Activated T-helper 2 cell treated with anti-CD3 and anti-CD28 coated beads, Interferon-gamma antibody, Interleukin-2, Interleukin-4, amounts not matched to agents 10 μg/mL and 5 μg/mL and 100 μg/mL, durations not matched to agents 14 hours and 24 hours and 36 hours (primary cell): ENCODE measurements at regions of chr17 and their contacts with region 1.

Region 1: DNA sequence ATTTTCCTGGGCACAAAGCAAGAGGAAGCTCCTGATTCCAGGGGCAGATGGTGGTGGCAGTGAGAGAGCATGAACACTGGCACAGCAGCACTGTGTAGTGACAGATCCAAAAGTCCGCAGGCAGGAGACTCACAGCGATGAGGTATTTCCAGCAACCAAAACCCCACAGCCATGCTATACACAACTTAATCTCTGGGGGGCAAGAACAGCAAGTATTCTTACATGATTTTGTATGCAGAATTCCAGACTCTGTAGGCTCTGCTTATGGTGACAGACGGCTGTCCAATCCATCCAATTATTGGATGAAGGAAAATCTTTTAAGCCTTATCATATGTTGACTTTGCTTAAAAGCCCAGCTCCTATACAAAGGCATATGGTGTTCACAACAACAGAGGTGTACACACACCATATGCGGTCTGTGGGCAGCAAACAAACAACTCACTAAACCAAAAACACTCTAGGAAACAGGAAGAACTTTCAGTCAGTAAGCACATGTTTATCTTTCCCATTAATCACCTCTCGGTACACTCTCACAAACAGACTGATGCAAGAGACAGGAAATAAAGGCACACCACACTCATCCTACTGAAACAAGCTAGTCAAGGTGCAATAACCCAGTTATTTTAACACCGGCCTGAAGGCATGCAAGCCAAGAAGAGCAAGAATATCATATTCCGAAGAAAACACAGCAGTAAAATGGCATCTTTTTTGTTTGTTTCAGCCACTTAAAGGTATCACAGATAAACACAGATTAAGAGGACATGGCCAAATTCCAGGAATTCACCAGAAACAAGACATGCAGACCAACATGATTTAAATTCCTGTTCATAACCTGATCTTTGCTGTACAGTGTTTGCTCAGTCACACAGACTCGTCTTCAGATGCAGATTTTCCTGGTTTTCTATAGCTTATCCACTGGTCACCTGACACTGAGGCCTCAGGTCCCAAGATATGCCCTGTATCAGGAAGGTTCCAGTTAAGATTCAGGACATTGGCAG is 47.8 kb downstream of the ERN1 start:
- DNase-seq: peak; percentile 39
- H3K4me3 Mint-ChIP-seq: peak overlapping the region; percentile 67
- H3K27ac Mint-ChIP-seq: peak overlapping the region; percentile 89
- H3K4me1 Mint-ChIP-seq: peaks cover 46% of the 10 kb centered on the region
- H3K27me3 Mint-ChIP-seq: no peaks in the 10 kb centered on the region

Region 2: DNA sequence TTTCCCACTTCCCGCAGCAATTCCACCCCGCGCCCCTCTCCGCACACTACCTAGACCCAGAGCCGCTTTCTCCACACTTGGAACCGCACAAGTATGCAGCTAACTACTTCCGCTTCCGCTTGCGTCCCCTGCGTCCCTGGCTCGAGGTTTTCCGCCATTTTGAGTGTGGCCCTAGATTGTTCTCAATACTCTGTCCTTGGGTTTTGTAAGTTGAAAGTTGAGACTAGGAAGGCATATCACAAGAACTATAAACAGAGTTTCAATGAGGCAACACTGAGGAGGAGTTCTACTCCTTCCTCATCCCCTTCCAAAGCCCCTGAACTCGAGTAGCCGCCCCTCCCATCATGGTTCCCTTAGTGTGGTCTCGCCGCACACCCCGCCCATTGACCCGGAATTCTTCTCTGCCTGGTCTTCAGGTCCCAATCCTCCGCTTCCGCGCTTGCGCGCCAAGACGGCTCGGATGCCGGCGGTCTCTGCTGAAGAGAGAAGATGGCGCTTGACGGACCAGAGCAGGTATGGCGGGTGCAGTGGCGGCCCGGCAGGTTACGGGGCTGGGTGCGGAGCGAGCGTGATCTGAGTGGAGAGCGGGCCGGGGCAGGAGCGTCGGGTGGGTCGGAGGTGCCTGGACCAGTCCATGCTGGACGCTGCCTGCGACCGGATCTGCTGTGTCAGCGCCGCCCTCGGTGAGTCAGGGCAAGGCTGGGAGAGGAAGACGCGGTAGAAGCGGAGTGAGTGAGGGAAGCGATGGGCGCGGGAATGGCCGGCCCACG is 254.9 kb before region 1 on chr17 and contains the starts of genes FTSJ3 and PSMC5:
- intact Hi-C with region 1: no loop called
- DNase-seq: peak; percentile 94
- H3K4me3 Mint-ChIP-seq: peak within 1 kb of the TSS; percentile 94
- H3K27ac Mint-ChIP-seq: peak within 1 kb of the TSS; percentile 99
- H3K4me1 Mint-ChIP-seq: peaks cover 56% of the 10 kb centered on the region
- H3K27me3 Mint-ChIP-seq: no peaks in the 10 kb centered on the region
- total RNA-seq, gene FTSJ3: 75.0 and 80.7 TPM in 2 replicates
- total RNA-seq, gene PSMC5: 185 and 204 TPM in 2 replicates

Region 3: DNA sequence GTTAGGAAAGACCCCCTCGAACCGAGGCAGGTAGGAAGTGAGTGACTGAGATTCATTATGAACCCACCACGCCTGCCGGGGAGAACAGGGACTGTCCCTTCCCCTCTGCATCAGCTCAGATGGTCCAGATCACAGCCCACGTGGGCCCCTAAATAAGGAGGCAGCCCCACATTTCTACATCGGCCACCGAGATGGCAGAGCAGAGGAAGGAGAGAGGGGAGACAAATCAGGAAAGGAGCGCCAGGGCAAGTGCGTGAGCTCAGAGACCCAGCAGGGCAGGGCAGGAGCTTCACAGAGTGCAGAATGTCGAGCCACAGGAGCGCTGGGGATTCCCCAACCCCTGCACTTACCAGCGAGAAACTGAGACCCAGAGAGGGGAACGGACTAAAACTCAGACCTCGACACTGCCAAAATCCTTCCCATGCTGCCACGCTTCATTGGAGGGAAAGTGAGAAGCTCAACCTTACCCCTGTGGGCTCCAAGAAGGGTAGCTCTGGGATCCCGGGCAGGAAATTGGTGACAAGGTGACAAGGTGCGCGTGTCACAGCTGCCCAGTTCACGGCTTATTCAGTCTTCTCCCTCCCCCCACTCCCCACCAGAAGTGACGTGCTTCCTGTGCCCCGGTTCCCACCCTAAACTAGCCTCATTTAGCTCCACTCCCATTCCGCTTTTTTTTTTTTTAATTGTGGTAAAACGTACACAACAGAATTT is 61.9 kb before region 1 on chr17 and contains the start of gene ICAM2:
- intact Hi-C with region 1: loop called (anchors 5 kb)
- DNase-seq: peak; percentile 88
- H3K4me3 Mint-ChIP-seq: peak within 1 kb of the TSS; percentile 99
- H3K27ac Mint-ChIP-seq: peak within 1 kb of the TSS; percentile 99
- H3K4me1 Mint-ChIP-seq: peaks cover 60% of the 10 kb centered on the region
- H3K27me3 Mint-ChIP-seq: no peaks in the 10 kb centered on the region
- total RNA-seq, gene ICAM2: 83.2 and 85.6 TPM in 2 replicates

Region 4: GRCh38 chr17:64063766-64064224 is 18.3 kb before region 1 on chr17:
- intact Hi-C with region 1: loop called (anchors 1 kb)
- DNase-seq: no peak
- H3K4me3 Mint-ChIP-seq: no peak overlapping the region
- H3K27ac Mint-ChIP-seq: peak overlapping the region; percentile 30
- H3K4me1 Mint-ChIP-seq: peaks cover 80% of the 10 kb centered on the region
- H3K27me3 Mint-ChIP-seq: no peaks in the 10 kb centered on the region

Region 5: DNA sequence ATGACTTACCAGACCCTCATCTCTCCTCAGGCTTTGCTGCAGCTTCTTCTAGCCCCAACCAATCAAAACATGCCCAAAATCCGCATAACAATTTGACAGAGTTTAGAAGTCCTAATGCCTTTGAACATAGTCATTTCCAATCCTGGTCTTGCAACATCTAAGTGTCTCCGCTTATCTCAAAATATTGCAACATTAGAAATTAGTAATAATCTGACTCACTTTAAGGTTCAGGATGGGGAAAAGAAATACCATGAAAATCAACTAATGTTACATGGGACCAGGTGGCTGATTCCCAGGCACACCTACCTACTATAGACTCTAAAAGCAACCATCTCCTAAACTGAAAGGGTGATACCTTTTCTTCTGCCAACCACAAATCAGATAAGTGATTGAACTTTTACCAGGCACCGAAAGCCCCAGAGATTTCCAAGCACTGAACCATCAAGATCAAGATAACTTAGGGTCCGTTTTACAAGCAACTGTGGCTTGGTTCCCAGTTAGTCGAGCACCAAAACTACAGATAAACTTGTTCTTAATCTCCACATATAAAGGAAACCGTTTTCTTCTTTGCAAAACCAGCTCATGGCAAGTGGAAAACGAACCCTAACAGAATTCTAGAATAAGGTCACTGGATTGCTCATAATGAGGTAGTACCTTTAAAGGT is 33.9 kb after region 1 on chr17:
- intact Hi-C with region 1: loop called (anchors 1 kb)
- DNase-seq: peak; percentile 26
- H3K4me3 Mint-ChIP-seq: peak overlapping the region; percentile 50
- H3K27ac Mint-ChIP-seq: peak overlapping the region; percentile 90
- H3K4me1 Mint-ChIP-seq: peaks cover 67% of the 10 kb centered on the region
- H3K27me3 Mint-ChIP-seq: no peaks in the 10 kb centered on the region

Region 6: GRCh38 chr17:64385187-64386083 is 303.3 kb after region 1 on chr17:
- intact Hi-C with region 1: loop called (anchors 10 kb)
- DNase-seq: no peak
- H3K4me3 Mint-ChIP-seq: peak overlapping the region; percentile 47
- H3K27ac Mint-ChIP-seq: peak overlapping the region; percentile 73
- H3K4me1 Mint-ChIP-seq: peaks cover 29% of the 10 kb centered on the region
- H3K27me3 Mint-ChIP-seq: no peaks in the 10 kb centered on the region

Region 7: GRCh38 chr17:64431534-64431933 is 349.4 kb after region 1 on chr17:
- intact Hi-C with region 1: no loop called
- DNase-seq: no peak
- H3K4me3 Mint-ChIP-seq: no peak overlapping the region
- H3K27ac Mint-ChIP-seq: no peak overlapping the region
- H3K4me1 Mint-ChIP-seq: no peaks in the 10 kb centered on the region
- H3K27me3 Mint-ChIP-seq: peaks cover 21% of the 10 kb centered on the region